BJ (cell line): ENCODE measurements at regions of chrX and their contacts with region 1.

Region 1: GRCh38 chrX:109890895-109891502 is 111.9 kb upstream of the TMEM164 start:
- DNase-seq: no peak
- H3K4me3 ChIP-seq: no peak overlapping the region
- H3K27me3 ChIP-seq: no peaks in the 10 kb centered on the region
- CTCF ChIP-seq: peak; percentile 83

Region 2: DNA sequence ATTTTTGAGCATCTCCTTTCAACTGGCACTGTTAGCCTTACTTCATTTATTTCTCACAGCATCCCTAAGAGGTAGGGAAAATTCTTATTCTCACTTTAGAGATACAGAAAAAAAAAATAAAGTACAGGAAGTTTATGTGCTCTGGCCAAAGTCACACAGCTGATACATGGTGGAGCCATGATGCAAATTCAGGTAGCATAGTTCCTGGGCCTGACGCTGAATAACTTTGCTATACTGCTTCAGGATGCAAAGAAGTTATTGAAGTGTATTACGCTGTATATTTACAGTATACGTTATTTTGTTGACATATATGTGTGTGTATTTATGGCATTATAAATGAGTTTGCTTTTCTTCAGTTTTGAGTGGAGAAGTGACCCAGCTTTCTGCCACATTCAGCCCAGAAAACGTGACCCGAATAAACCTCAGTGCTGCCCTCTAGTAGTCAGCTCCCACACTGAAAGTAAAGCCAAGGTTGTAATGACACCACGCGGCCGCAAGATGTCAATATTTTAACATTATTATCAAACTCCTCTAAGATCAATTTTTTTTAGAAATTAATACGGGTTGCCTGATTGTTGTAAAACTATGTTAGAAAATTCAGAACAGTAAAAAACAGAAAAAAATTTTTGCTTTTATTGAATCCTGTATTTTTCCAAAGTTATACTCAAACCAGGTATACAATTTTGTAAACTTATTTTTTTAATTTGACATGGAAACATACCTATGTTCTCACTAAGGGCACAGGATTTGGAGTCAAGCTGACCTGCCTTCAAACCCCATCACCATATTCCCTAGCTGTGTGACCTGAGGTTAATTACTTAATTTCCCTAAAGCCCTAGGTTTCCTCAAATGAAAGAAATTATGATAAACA is 405.3 kb before region 1 on chrX:
- CTCF ChIA-PET with region 1: interaction called, 90 read pairs
- POLR2A ChIA-PET with region 1: no interaction called
- DNase-seq: peak; percentile 15
- H3K4me3 ChIP-seq: no peak overlapping the region
- H3K27me3 ChIP-seq: no peaks in the 10 kb centered on the region
- CTCF ChIP-seq: peak; percentile 76

Region 3: DNA sequence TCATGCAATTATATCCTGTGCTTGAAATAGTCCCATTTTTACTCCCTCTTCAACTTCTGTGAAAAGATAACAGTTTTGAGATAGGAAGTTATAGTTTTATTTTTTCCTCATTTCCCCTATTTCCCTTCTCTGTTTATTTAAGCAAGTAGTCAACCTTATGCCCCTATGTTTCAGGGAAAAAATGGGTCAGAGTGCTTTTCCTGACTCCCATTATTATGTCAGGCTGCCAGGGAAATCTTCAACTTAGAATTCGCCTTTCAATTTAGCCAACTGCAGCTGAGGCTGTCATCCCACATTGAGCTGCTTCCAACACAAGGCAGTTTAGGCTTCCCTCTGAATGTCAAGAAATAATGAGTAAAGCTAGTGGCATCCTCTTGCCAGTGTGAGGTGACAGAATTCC is 312.1 kb before region 1 on chrX:
- CTCF ChIA-PET with region 1: no interaction called
- POLR2A ChIA-PET with region 1: no interaction called
- DNase-seq: no peak
- H3K4me3 ChIP-seq: no peak overlapping the region
- H3K27me3 ChIP-seq: no peaks in the 10 kb centered on the region
- CTCF ChIP-seq: no peak

Region 4: GRCh38 chrX:109679820-109680219 is 211.2 kb before region 1 on chrX:
- CTCF ChIA-PET with region 1: interaction called, 12 read pairs
- POLR2A ChIA-PET with region 1: no interaction called
- DNase-seq: no peak
- H3K4me3 ChIP-seq: no peak overlapping the region
- H3K27me3 ChIP-seq: no peaks in the 10 kb centered on the region
- CTCF ChIP-seq: no peak

Region 5: GRCh38 chrX:109714340-109714958 is 176.6 kb before region 1 on chrX:
- CTCF ChIA-PET with region 1: interaction called, 51 read pairs
- POLR2A ChIA-PET with region 1: no interaction called
- DNase-seq: no peak
- H3K4me3 ChIP-seq: no peak overlapping the region
- H3K27me3 ChIP-seq: no peaks in the 10 kb centered on the region
- CTCF ChIP-seq: no peak

Region 6: DNA sequence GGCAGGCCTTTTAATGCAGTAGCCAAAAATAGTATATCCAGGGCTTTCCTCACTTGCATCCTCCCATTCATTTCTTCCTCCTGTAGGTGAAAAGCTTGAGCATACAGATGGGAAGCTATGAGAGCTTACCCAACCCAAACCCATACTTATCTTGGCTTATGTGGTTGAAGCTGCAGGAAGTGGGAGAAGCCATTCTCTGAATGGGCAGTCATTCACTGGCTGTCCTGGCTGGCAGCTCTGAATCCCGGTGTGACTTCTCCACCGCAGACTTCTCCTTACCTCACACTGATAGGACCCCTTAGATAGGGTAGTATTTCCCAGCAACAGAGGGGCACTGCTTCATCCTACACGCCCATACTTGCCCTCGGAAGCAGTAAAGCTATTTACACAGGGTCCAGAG is 301.5 kb after region 1 on chrX:
- CTCF ChIA-PET with region 1: no interaction called
- POLR2A ChIA-PET with region 1: no interaction called
- DNase-seq: no peak
- H3K4me3 ChIP-seq: no peak overlapping the region
- H3K27me3 ChIP-seq: no peaks in the 10 kb centered on the region
- CTCF ChIP-seq: no peak